Natural killer cell (primary cell): ENCODE measurements at regions of chr3 and their contacts with region 1.

Region 1: DNA sequence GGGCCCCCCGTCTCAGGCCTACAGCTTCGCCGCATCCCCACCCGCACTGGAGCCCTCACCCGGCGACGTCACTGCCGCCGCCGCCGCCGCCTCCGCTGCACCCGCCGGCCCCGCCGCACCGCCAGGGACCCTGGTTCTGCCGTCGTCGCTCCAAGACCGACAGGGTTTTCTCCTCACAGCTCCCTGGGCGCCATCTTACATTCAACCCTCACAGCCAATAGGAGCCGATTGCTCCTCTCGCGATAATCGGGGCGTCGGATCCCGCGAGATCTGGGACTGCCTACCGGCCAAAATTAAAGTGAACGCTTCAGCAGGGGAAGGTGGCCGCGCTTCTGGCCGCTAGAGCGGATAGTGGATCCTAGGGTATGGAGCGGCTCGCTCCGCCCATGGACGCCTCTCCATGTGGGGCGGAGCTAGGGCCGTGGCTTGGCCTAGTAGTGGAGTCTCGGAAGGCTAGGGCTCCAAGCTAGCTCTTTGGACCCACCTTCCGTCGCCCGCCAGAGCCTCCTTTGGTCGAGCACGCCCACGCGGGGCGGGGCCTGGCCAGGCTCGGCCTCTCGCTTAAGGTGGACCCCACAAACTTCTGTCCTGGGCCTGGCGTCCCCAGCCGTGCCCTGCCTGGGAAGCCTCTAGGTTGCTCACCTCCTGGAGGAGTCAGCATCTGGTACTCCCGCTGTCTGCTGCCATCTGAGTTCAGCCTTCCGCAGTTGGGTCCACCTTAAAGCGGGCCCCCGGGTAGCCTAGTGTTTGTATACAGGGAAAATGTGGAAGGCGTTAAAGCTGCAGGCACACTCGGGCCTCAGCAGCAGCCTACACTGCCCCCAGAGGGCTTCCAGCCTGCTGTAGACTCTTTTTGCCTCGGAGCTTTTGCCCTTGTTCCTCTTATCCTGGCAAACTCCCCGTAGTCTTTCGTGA is at the start of gene QRICH1:
- DNase-seq: peak; percentile 95 to 97
- ATAC-seq: peak; percentile 79 to 89 (median 81)
- H3K4me3 ChIP-seq: peak within 1 kb of the TSS; percentile 84
- H3K4me3 Mint-ChIP-seq: peak within 1 kb of the TSS; percentile 92
- H3K27ac ChIP-seq: peak within 1 kb of the TSS; percentile 79
- H3K27ac Mint-ChIP-seq: peak within 1 kb of the TSS; percentile 95 to 96
- H3K4me1 ChIP-seq: peaks cover 30% of the 10 kb centered on the region
- H3K4me1 Mint-ChIP-seq: peaks cover 31 to 44% of the 10 kb centered on the region in 2 donors
- H3K27me3 ChIP-seq: no peaks in the 10 kb centered on the region
- H3K27me3 Mint-ChIP-seq: no peaks in the 10 kb centered on the region
- CTCF ChIP-seq: peak; percentile 57
- total RNA-seq, gene QRICH1: 220 to 230 (median 227) TPM

Region 2: DNA sequence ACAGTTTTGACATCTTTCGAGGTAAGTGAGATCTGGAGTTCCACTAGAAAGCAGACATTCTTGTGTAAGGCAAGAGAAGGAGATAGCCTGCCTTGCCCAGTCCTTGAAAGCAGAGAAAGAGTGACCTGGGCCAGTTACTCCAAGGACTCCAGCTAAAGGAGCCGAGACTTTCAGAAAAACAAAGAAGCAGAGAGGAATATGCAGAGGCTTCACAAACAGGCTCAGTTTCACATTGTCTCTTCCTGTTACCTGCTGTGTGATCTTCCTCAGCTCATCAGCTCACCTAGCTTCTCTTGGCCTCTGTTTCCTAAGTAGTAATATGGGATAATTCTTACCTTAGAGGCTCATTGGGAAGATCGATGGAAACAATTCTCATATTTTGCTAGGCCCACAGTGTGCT is 986.9 kb before region 1 on chr3:
- intact Hi-C with region 1: no loop called
- DNase-seq: no peak
- ATAC-seq: no peak
- H3K4me3 ChIP-seq: no peak overlapping the region
- H3K4me3 Mint-ChIP-seq: no peak overlapping the region
- H3K27ac ChIP-seq: no peak overlapping the region
- H3K27ac Mint-ChIP-seq: no peak overlapping the region
- H3K4me1 ChIP-seq: peaks cover 9% of the 10 kb centered on the region
- H3K4me1 Mint-ChIP-seq: peaks cover under 1 to 3% of the 10 kb centered on the region in 2 donors
- H3K27me3 ChIP-seq: no peaks in the 10 kb centered on the region
- H3K27me3 Mint-ChIP-seq: no peaks in the 10 kb centered on the region
- CTCF ChIP-seq: no peak

Region 3: GRCh38 chr3:48685602-48686511 is 408.3 kb before region 1 on chr3 and contains the start of gene NCKIPSD:
- intact Hi-C with region 1: loop called (anchors 5 kb)
- DNase-seq: peak; percentile 90 to 95
- ATAC-seq: peak; percentile 93 to 98 (median 96)
- H3K4me3 ChIP-seq: peak within 1 kb of the TSS; percentile 65
- H3K4me3 Mint-ChIP-seq: peak within 1 kb of the TSS; percentile 93
- H3K27ac ChIP-seq: peak within 1 kb of the TSS; percentile 59
- H3K27ac Mint-ChIP-seq: peak within 1 kb of the TSS; percentile 78 to 93
- H3K4me1 ChIP-seq: peaks cover 23% of the 10 kb centered on the region
- H3K4me1 Mint-ChIP-seq: peaks cover 26 to 34% of the 10 kb centered on the region in 2 donors
- H3K27me3 ChIP-seq: no peaks in the 10 kb centered on the region
- H3K27me3 Mint-ChIP-seq: no peaks in the 10 kb centered on the region
- CTCF ChIP-seq: peak; percentile 95
- total RNA-seq, gene NCKIPSD: 12.2 to 14.1 (median 12.8) TPM

Region 4: DNA sequence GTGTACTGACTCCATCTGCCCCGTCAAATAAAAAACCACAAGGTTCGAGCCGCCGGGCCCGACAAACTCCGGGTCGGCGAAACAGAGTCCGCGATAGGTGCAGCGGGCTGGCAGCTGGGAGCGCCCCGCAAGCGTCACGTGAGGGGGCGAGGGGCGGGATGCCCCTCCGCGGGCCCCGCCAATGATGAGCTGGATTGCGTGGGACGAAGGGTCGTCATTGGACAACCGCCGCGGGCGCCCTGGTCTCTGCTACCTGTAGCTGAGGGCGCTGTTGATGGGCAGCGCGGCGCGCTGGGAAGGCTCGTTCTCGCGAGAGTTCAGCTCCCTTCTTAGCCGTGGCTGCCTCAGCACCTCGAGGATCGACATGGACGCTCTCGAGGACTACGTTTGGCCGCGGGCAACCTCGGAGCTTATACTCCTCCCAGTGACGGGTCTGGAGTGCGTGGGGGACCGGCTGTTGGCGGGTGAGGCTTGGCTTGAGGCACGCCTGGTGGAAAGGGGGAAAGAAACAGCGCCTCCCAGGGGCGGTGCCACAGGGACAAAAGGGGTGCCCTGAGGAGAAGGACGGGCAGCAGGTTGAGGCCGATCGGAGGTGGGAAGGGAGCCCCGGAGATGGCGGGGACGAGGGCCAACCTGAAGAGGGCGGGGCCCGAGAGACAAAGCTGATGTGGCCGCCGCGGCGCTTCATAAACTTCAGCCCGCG is 86.9 kb before region 1 on chr3 and contains the start of gene WDR6:
- intact Hi-C with region 1: loop called (anchors 5 kb)
- DNase-seq: peak; percentile 94 to 99
- ATAC-seq: peak; percentile 91 to 98 (median 94)
- H3K4me3 ChIP-seq: peak within 1 kb of the TSS; percentile 96
- H3K4me3 Mint-ChIP-seq: peak within 1 kb of the TSS; percentile 100
- H3K27ac ChIP-seq: peak within 1 kb of the TSS; percentile 95
- H3K27ac Mint-ChIP-seq: peak within 1 kb of the TSS; percentile 98 to 99
- H3K4me1 ChIP-seq: peaks cover 20% of the 10 kb centered on the region
- H3K4me1 Mint-ChIP-seq: peaks cover 21 to 24% of the 10 kb centered on the region in 2 donors
- H3K27me3 ChIP-seq: no peaks in the 10 kb centered on the region
- H3K27me3 Mint-ChIP-seq: no peaks in the 10 kb centered on the region
- CTCF ChIP-seq: peak; percentile 44
- total RNA-seq, gene WDR6: 113 to 167 (median 129) TPM

Region 5: DNA sequence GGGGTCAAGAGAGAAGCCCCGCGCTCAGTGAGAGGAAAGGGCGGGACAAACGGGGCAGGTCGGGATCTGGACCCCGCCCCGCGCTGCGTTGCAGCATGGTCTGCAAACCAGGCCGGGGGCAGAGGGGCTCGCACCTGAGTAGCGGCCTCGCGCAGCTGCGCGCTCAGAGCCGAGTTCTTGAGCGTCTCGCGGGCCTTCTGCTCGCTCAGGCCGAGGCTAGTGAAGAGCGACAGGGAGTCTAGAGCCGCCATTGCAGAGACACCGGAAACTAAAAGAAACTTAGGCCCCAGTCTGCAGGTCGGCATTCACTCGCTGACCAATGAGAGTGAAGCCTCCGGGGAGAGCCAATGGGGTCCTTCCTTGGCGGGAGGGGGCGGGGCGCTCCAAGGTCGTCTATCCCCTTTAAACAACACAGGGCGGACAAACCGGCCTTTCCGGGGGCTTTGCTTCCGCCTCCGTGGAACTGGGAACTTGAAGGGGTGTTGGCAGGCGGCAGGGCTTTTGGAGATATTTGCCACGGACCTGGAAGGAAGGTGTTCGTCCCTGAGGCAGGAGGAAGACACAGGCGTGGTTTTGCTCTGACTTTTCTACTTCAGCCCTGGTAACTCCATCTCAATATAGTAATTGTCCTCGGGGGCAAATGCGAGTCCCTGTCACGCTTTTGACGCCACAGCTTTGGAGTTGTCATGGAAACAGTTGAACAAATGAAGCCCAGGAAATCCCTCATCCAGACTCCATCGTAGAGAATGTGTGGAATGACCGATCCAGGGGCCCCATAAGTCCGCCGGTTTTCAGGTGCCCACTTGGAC is 10.6 kb after region 1 on chr3 and contains the start of gene QARS1:
- intact Hi-C with region 1: loop called (anchors 1 kb)
- DNase-seq: peak; percentile 87 to 93
- ATAC-seq: peak; percentile 98 to 99 (median 99)
- H3K4me3 ChIP-seq: peak within 1 kb of the TSS; percentile 92
- H3K4me3 Mint-ChIP-seq: peak within 1 kb of the TSS; percentile 99
- H3K27ac ChIP-seq: peak within 1 kb of the TSS; percentile 73
- H3K27ac Mint-ChIP-seq: peak within 1 kb of the TSS; percentile 95 to 99
- H3K4me1 ChIP-seq: peaks cover 19% of the 10 kb centered on the region
- H3K4me1 Mint-ChIP-seq: peaks cover 30 to 35% of the 10 kb centered on the region in 2 donors
- H3K27me3 ChIP-seq: no peaks in the 10 kb centered on the region
- H3K27me3 Mint-ChIP-seq: no peaks in the 10 kb centered on the region
- CTCF ChIP-seq: no peak
- total RNA-seq, gene QARS1: 250 to 280 (median 258) TPM

Region 6: GRCh38 chr3:49165771-49166751 is 72.0 kb after region 1 on chr3 and contains the start of gene CCDC71:
- intact Hi-C with region 1: loop called (anchors 5 kb)
- DNase-seq: peak; percentile 72 to 89
- ATAC-seq: peak; percentile 80 to 87 (median 86)
- H3K4me3 ChIP-seq: peak within 1 kb of the TSS; percentile 85
- H3K4me3 Mint-ChIP-seq: peak within 1 kb of the TSS; percentile 92
- H3K27ac ChIP-seq: peak within 1 kb of the TSS; percentile 76
- H3K27ac Mint-ChIP-seq: peak within 1 kb of the TSS; percentile 87 to 93
- H3K4me1 ChIP-seq: peaks cover 27% of the 10 kb centered on the region
- H3K4me1 Mint-ChIP-seq: peaks cover 24 to 36% of the 10 kb centered on the region in 2 donors
- H3K27me3 ChIP-seq: no peaks in the 10 kb centered on the region
- H3K27me3 Mint-ChIP-seq: no peaks in the 10 kb centered on the region
- CTCF ChIP-seq: no peak
- total RNA-seq, gene CCDC71: 13.8 to 20.6 (median 15.6) TPM

Region 7: DNA sequence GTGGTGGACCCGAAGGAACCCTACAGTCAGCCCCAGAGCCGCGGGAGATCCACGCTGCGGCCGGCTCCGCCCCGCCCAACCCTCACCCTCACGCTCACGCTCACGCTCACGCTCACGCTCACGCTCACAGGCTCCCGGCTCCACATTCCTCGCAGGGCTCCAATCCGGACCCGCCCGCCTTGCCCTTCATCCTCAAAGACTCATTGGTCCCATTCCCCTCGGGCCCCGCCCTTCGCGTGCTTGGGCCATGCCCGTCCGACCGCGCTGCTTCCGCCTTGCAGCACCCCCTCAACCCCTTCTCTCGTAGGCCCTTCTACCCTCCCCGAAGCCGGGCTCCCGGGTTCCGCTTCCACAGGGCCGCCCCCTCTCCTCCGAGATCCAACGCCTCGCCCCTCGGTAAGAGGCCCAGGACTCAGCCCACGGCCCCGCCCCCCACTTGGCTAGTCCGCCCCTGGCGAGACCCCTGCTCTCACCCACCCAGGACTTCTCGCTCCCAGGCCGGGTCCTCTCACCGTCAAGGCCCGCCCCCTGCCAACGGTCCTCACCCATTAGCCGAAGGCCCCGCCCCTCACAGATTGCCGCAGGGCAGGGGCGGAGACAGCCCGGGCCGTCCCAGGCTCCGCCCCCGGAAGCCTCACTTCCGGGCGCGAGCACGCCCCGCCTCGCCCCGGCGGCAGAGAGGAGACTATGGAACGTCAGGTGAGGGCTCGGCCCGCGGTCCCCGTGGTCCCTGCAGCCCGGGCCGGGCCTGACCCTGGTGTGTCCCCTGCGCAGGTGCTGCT is 579.8 kb after region 1 on chr3 and contains the start of gene APEH:
- intact Hi-C with region 1: loop called (anchors 5 kb)
- DNase-seq: peak; percentile 96 to 98
- ATAC-seq: peak; percentile 88 to 95 (median 89)
- H3K4me3 ChIP-seq: peak within 1 kb of the TSS; percentile 80
- H3K4me3 Mint-ChIP-seq: peak within 1 kb of the TSS; percentile 95
- H3K27ac ChIP-seq: peak within 1 kb of the TSS; percentile 98
- H3K27ac Mint-ChIP-seq: peak within 1 kb of the TSS; percentile 94 to 100
- H3K4me1 ChIP-seq: peaks cover 23% of the 10 kb centered on the region
- H3K4me1 Mint-ChIP-seq: peaks cover 14 to 33% of the 10 kb centered on the region in 2 donors
- H3K27me3 ChIP-seq: no peaks in the 10 kb centered on the region
- H3K27me3 Mint-ChIP-seq: no peaks in the 10 kb centered on the region
- CTCF ChIP-seq: no peak
- total RNA-seq, gene APEH: 62.8 to 95.7 (median 77.5) TPM